B cell (primary cell): ENCODE measurements at regions of chr17 and their contacts with region 1.

Region 1: DNA sequence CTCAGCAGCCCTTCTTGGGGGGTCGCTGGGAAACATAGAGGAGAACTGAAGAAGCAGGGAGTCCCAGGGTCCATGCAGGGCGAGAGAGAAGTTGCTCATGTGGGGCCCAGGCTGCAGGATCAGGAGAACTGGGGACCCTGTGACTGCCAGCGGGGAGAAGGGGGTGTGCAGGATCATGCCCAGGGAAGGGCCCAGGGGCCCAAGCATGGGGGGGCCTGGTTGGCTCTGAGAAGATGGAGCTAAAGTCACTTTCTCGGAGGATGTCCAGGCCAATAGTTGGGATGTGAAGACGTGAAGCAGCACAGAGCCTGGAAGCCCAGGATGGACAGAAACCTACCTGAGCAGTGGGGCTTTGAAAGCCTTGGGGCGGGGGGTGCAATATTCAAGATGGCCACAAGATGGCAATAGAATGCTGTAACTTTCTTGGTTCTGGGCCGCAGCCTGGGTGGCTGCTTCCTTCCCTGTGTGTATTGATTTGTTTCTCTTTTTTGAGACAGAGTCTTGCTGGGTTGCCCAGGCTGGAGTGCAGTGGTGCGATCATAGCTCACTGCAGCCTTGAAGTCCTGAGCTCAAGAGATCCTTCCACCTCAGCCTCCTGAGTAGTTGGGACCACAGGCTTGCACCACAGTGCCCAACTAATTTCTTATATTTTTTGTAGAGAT is 3.4 kb downstream of the STH start:
- DNase-seq: peak; percentile 84
- ATAC-seq: peak; percentile 97
- H3K4me3 ChIP-seq: no peak overlapping the region
- H3K4me3 Mint-ChIP-seq: no peak overlapping the region
- H3K27ac ChIP-seq: no peak overlapping the region
- H3K27ac Mint-ChIP-seq: no peak overlapping the region
- H3K4me1 ChIP-seq: peaks cover 0 to 5% of the 10 kb centered on the region in 2 donors
- H3K4me1 Mint-ChIP-seq: no peaks in the 10 kb centered on the region
- H3K27me3 ChIP-seq: no peaks in the 10 kb centered on the region
- H3K27me3 Mint-ChIP-seq: no peaks in the 10 kb centered on the region
- CTCF ChIP-seq: peak; percentile 92

Region 2: DNA sequence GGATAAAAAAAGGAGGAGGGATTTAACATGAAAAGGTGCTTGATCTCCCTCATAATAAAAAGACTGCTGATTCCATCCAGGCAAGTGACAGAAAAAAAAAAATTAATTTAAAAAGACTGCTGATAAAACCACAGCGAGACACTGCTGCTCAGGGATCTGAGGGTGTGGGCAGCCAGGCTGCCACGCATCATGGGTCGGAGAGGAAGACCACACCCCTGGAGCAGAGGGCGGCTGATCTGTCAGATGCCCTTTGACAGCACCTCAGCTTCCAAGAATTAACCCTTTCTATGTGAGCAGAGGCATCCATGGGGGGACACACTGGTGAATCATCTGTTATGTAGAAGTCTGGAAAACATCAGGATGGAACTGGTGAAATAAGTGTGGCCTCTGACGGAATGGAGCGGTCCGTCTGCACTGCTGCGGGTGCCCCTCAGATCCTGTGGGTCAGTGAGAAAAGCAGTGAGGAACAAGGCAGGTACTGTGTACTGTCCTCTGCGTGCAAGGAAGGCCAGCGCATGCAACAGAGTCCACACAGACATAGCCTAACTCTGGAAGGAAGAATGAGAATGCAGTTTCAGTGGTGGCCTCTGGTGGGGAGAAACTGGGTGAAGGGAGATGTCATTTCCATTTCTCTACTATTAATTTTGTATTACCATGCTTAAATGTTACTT is 88.3 kb before region 1 on chr17:
- CTCF ChIA-PET with region 1: no interaction called
- POLR2A ChIA-PET with region 1: no interaction called
- intact Hi-C with region 1: no loop called
- DNase-seq: no peak
- ATAC-seq: no peak
- H3K4me3 ChIP-seq: no peak overlapping the region
- H3K4me3 Mint-ChIP-seq: no peak overlapping the region
- H3K27ac ChIP-seq: no peak overlapping the region
- H3K27ac Mint-ChIP-seq: no peak overlapping the region
- H3K4me1 ChIP-seq: peaks cover 0 to 4% of the 10 kb centered on the region in 2 donors
- H3K4me1 Mint-ChIP-seq: no peaks in the 10 kb centered on the region
- H3K27me3 ChIP-seq: peaks cover 0 to 6% (median 0%) of the 10 kb centered on the region in 4 experiments
- H3K27me3 Mint-ChIP-seq: peaks cover 40% of the 10 kb centered on the region
- CTCF ChIP-seq: no peak

Region 3: DNA sequence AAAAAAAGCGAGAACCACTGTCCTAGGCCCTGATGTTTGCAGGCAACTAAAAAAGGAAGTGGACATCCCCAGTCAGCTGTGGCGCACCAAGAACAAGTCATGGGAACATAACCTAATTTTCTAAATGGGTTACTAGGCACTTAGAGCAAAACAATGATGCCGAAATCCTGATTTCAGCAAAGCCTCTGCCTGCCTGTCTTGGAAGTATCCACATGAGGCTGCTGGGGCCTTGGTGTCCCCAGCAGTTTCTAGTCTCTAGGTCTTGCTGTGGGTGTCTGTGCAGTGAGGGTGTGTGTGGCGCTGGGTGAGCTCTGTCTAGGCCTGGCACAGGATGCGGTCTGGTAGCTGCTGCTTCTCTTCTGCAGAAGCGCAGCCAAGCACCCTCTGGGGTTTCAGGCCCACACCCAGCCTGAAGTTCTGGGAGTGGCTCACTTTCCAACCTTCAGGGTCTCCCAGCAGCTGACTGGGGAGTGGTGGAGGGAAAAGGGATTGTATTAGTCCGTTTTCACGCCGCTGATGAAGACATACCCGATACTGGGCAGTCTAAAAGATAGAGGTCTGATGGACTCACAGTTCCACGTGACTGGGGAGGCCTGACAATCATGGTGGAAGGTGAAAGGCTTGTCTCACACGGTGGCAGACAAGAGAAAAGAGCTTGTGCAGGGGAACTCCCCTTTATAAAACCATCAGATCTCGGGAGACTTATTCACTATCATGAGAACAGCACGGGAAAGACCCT is 17.8 kb after region 1 on chr17:
- CTCF ChIA-PET with region 1: interaction called, 43 read pairs
- POLR2A ChIA-PET with region 1: no interaction called
- intact Hi-C with region 1: no loop called
- DNase-seq: peak; percentile 83
- ATAC-seq: peak; percentile 96
- H3K4me3 ChIP-seq: no peak overlapping the region
- H3K4me3 Mint-ChIP-seq: peak overlapping the region; percentile 62
- H3K27ac ChIP-seq: peak overlapping the region; percentile 88 to 93
- H3K27ac Mint-ChIP-seq: peak overlapping the region; percentile 98
- H3K4me1 ChIP-seq: peaks cover 24 to 48% of the 10 kb centered on the region in 2 donors
- H3K4me1 Mint-ChIP-seq: peaks cover 38% of the 10 kb centered on the region
- H3K27me3 ChIP-seq: no peaks in the 10 kb centered on the region
- H3K27me3 Mint-ChIP-seq: no peaks in the 10 kb centered on the region
- CTCF ChIP-seq: no peak

Region 4: DNA sequence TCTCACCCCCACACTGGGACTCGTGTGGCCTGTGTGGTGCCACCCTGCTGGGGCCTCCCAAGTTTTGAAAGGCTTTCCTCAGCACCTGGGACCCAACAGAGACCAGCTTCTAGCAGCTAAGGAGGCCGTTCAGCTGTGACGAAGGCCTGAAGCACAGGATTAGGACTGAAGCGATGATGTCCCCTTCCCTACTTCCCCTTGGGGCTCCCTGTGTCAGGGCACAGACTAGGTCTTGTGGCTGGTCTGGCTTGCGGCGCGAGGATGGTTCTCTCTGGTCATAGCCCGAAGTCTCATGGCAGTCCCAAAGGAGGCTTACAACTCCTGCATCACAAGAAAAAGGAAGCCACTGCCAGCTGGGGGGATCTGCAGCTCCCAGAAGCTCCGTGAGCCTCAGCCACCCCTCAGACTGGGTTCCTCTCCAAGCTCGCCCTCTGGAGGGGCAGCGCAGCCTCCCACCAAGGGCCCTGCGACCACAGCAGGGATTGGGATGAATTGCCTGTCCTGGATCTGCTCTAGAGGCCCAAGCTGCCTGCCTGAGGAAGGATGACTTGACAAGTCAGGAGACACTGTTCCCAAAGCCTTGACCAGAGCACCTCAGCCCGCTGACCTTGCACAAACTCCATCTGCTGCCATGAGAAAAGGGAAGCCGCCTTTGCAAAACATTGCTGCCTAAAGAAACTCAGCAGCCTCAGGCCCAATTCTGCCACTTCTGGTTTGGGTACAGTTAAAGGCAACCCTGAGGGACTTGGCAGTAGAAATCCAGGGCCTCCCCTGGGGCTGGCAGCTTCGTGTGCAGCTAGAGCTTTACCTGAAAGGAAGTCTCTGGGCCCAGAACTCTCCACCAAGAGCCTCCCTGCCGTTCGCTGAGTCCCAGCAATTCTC is 24.0 kb after region 1 on chr17:
- CTCF ChIA-PET with region 1: interaction called, 43 read pairs
- POLR2A ChIA-PET with region 1: no interaction called
- intact Hi-C with region 1: no loop called
- DNase-seq: peak; percentile 52
- ATAC-seq: peak; percentile 42
- H3K4me3 ChIP-seq: no peak overlapping the region
- H3K4me3 Mint-ChIP-seq: peak overlapping the region; percentile 38
- H3K27ac ChIP-seq: peak overlapping the region; percentile 65 to 69
- H3K27ac Mint-ChIP-seq: peak overlapping the region; percentile 91
- H3K4me1 ChIP-seq: peaks cover 49 to 66% of the 10 kb centered on the region in 2 donors
- H3K4me1 Mint-ChIP-seq: peaks cover 59% of the 10 kb centered on the region
- H3K27me3 ChIP-seq: no peaks in the 10 kb centered on the region
- H3K27me3 Mint-ChIP-seq: no peaks in the 10 kb centered on the region
- CTCF ChIP-seq: no peak

Region 5: GRCh38 chr17:46061435-46061834 is 59.0 kb after region 1 on chr17:
- CTCF ChIA-PET with region 1: interaction called, 6 read pairs
- POLR2A ChIA-PET with region 1: no interaction called
- intact Hi-C with region 1: loop called (anchors 1 kb)
- DNase-seq: peak; percentile 25
- ATAC-seq: no peak
- H3K4me3 ChIP-seq: no peak overlapping the region
- H3K4me3 Mint-ChIP-seq: no peak overlapping the region
- H3K27ac ChIP-seq: no peak overlapping the region
- H3K27ac Mint-ChIP-seq: no peak overlapping the region
- H3K4me1 ChIP-seq: no peaks in the 10 kb centered on the region
- H3K4me1 Mint-ChIP-seq: no peaks in the 10 kb centered on the region
- H3K27me3 ChIP-seq: no peaks in the 10 kb centered on the region
- H3K27me3 Mint-ChIP-seq: no peaks in the 10 kb centered on the region
- CTCF ChIP-seq: peak; percentile 44